ENCODE measurements at regions of chr12 and their contacts with region 1.

Region 1: GRCh38 chr12:56189176-56189917 is at the start of gene SMARCC2:
- DNase-seq: peak; percentile 80 to 90 (median 84)
- H3K4me3 ChIP-seq: peak within 1 kb of the TSS; percentile 95
- H3K4me3 Mint-ChIP-seq: peak within 1 kb of the TSS; percentile 92 to 99 (median 97)
- H3K27ac ChIP-seq: peak within 1 kb of the TSS; percentile 84
- H3K27ac Mint-ChIP-seq: peak within 1 kb of the TSS; percentile 93 to 100 (median 98)
- H3K4me1 ChIP-seq: peaks cover 31% of the 10 kb centered on the region
- H3K4me1 Mint-ChIP-seq: peaks cover 40 to 54% (median 52%) of the 10 kb centered on the region in 3 donors
- H3K27me3 ChIP-seq: no peaks in the 10 kb centered on the region
- H3K27me3 Mint-ChIP-seq: peaks cover 0 to 8% of the 10 kb centered on the region in 2 donors
- total RNA-seq, gene SMARCC2: 107 to 118 TPM

Region 2: GRCh38 chr12:56104109-56104814 is 85.1 kb before region 1 on chr12 and contains the start of gene PA2G4:
- CTCF ChIA-PET with region 1: interaction called, 10 read pairs
- POLR2A ChIA-PET with region 1: interaction called, 10 read pairs
- DNase-seq: peak; percentile 90 to 98 (median 96)
- H3K4me3 ChIP-seq: peak within 1 kb of the TSS; percentile 79
- H3K4me3 Mint-ChIP-seq: peak within 1 kb of the TSS; percentile 97 to 100 (median 98)
- H3K27ac ChIP-seq: peak within 1 kb of the TSS; percentile 82
- H3K27ac Mint-ChIP-seq: peak within 1 kb of the TSS; percentile 95 to 99 (median 98)
- H3K4me1 ChIP-seq: peaks cover 40% of the 10 kb centered on the region
- H3K4me1 Mint-ChIP-seq: peaks cover 61 to 68% (median 62%) of the 10 kb centered on the region in 3 donors
- H3K27me3 ChIP-seq: no peaks in the 10 kb centered on the region
- H3K27me3 Mint-ChIP-seq: no peaks in the 10 kb centered on the region
- total RNA-seq, gene PA2G4: 468 to 504 TPM

Region 3: DNA sequence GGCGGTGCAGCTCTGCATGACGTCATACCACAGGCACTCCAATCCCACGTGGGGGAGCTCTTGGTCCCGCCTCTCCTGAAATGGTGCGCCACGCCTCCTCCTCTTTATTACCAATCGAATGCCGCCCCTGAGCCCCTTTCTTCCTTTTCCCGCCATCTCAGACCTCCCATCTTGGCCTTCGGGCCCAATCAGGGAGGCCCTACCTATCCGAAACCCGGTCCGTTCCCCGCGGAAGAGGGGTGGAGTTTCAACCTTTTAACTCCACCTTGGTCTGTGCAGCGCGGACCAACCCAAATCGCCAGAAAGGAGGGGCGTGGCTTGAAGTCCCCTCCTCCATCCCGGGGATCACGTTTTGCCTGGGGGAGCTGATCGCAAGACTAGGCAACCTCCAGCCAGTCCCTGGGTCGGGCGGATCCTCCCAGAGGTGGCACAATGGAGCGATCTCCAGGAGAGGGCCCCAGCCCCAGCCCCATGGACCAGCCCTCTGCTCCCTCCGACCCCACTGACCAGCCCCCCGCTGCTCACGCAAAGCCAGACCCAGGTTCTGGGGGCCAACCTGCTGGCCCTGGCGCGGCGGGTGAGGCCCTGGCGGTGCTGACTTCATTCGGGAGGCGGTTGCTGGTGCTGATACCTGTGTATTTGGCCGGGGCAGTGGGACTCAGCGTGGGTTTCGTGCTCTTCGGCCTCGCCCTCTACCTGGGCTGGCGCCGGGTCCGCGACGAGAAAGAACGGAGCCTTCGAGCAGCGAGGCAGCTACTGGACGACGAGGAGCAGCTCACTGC is 61.3 kb before region 1 on chr12 and contains the start of gene ESYT1:
- CTCF ChIA-PET with region 1: interaction called, 121 read pairs
- POLR2A ChIA-PET with region 1: interaction called, 58 read pairs
- DNase-seq: peak; percentile 94 to 99 (median 99)
- H3K4me3 ChIP-seq: peak within 1 kb of the TSS; percentile 90
- H3K4me3 Mint-ChIP-seq: peak within 1 kb of the TSS; percentile 86 to 99 (median 98)
- H3K27ac ChIP-seq: peak within 1 kb of the TSS; percentile 90
- H3K27ac Mint-ChIP-seq: peak within 1 kb of the TSS; percentile 90 to 99 (median 98)
- H3K4me1 ChIP-seq: peaks cover 50% of the 10 kb centered on the region
- H3K4me1 Mint-ChIP-seq: peaks cover 59 to 71% (median 69%) of the 10 kb centered on the region in 3 donors
- H3K27me3 ChIP-seq: no peaks in the 10 kb centered on the region
- H3K27me3 Mint-ChIP-seq: peaks cover 0 to 2% of the 10 kb centered on the region in 2 donors
- total RNA-seq, gene ESYT1: 185 to 191 TPM

Region 4: GRCh38 chr12:56152318-56153033 is 36.9 kb before region 1 on chr12 and contains the start of gene MYL6B:
- CTCF ChIA-PET with region 1: interaction called, 10 read pairs
- POLR2A ChIA-PET with region 1: interaction called, 11 read pairs
- DNase-seq: peak; percentile 84 to 94 (median 87)
- H3K4me3 ChIP-seq: peak within 1 kb of the TSS; percentile 60
- H3K4me3 Mint-ChIP-seq: peak within 1 kb of the TSS; percentile 89 to 98 (median 91)
- H3K27ac ChIP-seq: peak within 1 kb of the TSS; percentile 80
- H3K27ac Mint-ChIP-seq: peak within 1 kb of the TSS; percentile 94 to 98 (median 97)
- H3K4me1 ChIP-seq: peaks cover 29% of the 10 kb centered on the region
- H3K4me1 Mint-ChIP-seq: peaks cover 33 to 38% (median 35%) of the 10 kb centered on the region in 3 donors
- H3K27me3 ChIP-seq: no peaks in the 10 kb centered on the region
- H3K27me3 Mint-ChIP-seq: no peaks in the 10 kb centered on the region
- total RNA-seq, gene MYL6B: 68.6 to 70.0 TPM

Region 5: GRCh38 chr12:56172831-56173230 is 16.5 kb before region 1 on chr12:
- CTCF ChIA-PET with region 1: interaction called, 12 read pairs
- POLR2A ChIA-PET with region 1: interaction called, 3 read pairs
- DNase-seq: no peak
- H3K4me3 ChIP-seq: no peak overlapping the region
- H3K4me3 Mint-ChIP-seq: no peak overlapping the region
- H3K27ac ChIP-seq: no peak overlapping the region
- H3K27ac Mint-ChIP-seq: peak overlapping the region in 2 of 8 donors; percentile 14 to 33
- H3K4me1 ChIP-seq: no peaks in the 10 kb centered on the region
- H3K4me1 Mint-ChIP-seq: no peaks in the 10 kb centered on the region
- H3K27me3 ChIP-seq: no peaks in the 10 kb centered on the region
- H3K27me3 Mint-ChIP-seq: no peaks in the 10 kb centered on the region

Region 6: GRCh38 chr12:56224102-56224701 is 34.9 kb after region 1 on chr12 and contains the start of gene NABP2:
- CTCF ChIA-PET with region 1: interaction called, 38 read pairs
- POLR2A ChIA-PET with region 1: interaction called, 12 read pairs
- DNase-seq: peak; percentile 90 to 94 (median 92)
- H3K4me3 ChIP-seq: peak within 1 kb of the TSS; percentile 67
- H3K4me3 Mint-ChIP-seq: peak within 1 kb of the TSS; percentile 86 to 99 (median 93)
- H3K27ac ChIP-seq: peak within 1 kb of the TSS; percentile 62
- H3K27ac Mint-ChIP-seq: peak within 1 kb of the TSS; percentile 90 to 100 (median 100)
- H3K4me1 ChIP-seq: peaks cover 34% of the 10 kb centered on the region
- H3K4me1 Mint-ChIP-seq: peaks cover 42 to 55% (median 53%) of the 10 kb centered on the region in 3 donors
- H3K27me3 ChIP-seq: no peaks in the 10 kb centered on the region
- H3K27me3 Mint-ChIP-seq: peaks cover 0 to 2% of the 10 kb centered on the region in 2 donors
- total RNA-seq, gene NABP2: 102 to 104 TPM

Region 7: GRCh38 chr12:56468216-56469006 is 279.1 kb after region 1 on chr12 and contains the start of gene SPRYD4:
- CTCF ChIA-PET with region 1: interaction called, 11 read pairs
- POLR2A ChIA-PET with region 1: interaction called, 4 read pairs
- DNase-seq: peak; percentile 90 to 96 (median 94)
- H3K4me3 ChIP-seq: peak within 1 kb of the TSS; percentile 100
- H3K4me3 Mint-ChIP-seq: peak within 1 kb of the TSS; percentile 95 to 98 (median 96)
- H3K27ac ChIP-seq: peak within 1 kb of the TSS; percentile 94
- H3K27ac Mint-ChIP-seq: peak within 1 kb of the TSS; percentile 94 to 99 (median 98)
- H3K4me1 ChIP-seq: peaks cover 15% of the 10 kb centered on the region
- H3K4me1 Mint-ChIP-seq: peaks cover 23 to 52% (median 42%) of the 10 kb centered on the region in 3 donors
- H3K27me3 ChIP-seq: no peaks in the 10 kb centered on the region
- H3K27me3 Mint-ChIP-seq: no peaks in the 10 kb centered on the region
- total RNA-seq, gene SPRYD4: 3.7 to 3.9 TPM

Measured in CD8-positive, alpha-beta memory T cell (primary cell).